ENCODE measurements at regions of chr2 and their contacts with region 1.

Region 1: GRCh38 chr2:160406591-160407392 is 86.8 kb downstream of the RBMS1 start:
- DNase-seq: peak; percentile 88
- H3K4me3 ChIP-seq: peak overlapping the region; percentile 89
- H3K27ac ChIP-seq: peak overlapping the region; percentile 80
- H3K4me1 ChIP-seq: peaks cover 55% of the 10 kb centered on the region
- CTCF ChIP-seq: peak; percentile 62; the same call in 1 of the 2 replicates

Region 2: DNA sequence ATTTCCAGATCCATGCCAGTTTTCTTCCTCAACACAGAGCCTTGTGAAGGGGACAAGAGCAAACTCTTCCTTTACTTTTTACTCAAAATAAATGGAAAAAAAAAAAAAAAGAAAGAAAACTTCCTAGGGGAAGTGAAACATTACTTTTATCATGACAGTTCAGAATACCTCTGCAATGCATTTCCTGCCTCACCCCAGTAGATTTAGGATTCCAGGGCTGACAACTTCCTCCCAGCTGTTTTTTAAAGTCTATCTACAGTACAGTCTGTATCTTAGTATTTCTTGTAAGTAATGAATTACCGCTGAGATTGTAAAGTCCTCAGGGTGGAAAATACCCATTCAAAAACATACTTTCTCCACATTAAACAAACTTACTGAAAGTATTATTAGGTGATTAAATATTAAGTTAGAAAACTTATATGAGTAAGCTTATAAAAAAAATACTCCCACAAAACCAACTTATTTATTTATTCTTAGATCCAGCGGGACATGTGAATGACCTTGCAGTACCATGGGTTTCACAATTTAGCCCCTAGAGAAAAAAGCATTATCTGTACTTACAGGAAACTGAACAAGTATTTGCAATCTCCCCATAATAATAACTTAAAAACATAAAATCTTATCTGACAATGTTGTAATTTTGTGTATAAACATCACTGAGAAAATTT is 30.9 kb before region 1 on chr2:
- CTCF ChIA-PET with region 1: no interaction called
- POLR2A ChIA-PET with region 1: interaction called, 14 read pairs
- intact Hi-C with region 1: no loop called
- DNase-seq: peak; percentile 64
- H3K4me3 ChIP-seq: peak overlapping the region; percentile 2
- H3K27ac ChIP-seq: peak overlapping the region; percentile 29
- H3K4me1 ChIP-seq: peaks cover 27% of the 10 kb centered on the region
- CTCF ChIP-seq: no peak

Region 3: DNA sequence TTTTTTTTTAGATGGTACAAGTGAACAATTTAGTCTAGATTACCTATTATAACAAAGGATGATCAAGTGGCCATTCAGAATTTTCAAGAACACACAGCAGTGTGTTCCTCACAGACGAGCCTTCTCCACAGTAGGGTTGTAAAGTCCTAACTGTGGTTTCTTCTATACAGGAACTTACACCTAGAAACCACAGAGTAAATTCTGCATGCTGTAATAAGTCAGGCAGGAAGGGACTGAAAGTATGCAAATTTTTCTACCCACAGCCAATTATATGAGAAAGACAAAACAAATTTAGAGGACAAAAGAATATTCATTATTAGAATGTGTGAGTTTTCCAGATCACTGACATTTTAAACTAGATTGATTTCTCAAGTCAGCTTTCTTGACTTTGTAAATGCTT is 12.6 kb before region 1 on chr2:
- CTCF ChIA-PET with region 1: no interaction called
- POLR2A ChIA-PET with region 1: interaction called, 30 read pairs
- intact Hi-C with region 1: no loop called
- DNase-seq: peak; percentile 71
- H3K4me3 ChIP-seq: peak overlapping the region; percentile 32
- H3K27ac ChIP-seq: peak overlapping the region; percentile 50
- H3K4me1 ChIP-seq: peaks cover 24% of the 10 kb centered on the region
- CTCF ChIP-seq: no peak

Region 4: DNA sequence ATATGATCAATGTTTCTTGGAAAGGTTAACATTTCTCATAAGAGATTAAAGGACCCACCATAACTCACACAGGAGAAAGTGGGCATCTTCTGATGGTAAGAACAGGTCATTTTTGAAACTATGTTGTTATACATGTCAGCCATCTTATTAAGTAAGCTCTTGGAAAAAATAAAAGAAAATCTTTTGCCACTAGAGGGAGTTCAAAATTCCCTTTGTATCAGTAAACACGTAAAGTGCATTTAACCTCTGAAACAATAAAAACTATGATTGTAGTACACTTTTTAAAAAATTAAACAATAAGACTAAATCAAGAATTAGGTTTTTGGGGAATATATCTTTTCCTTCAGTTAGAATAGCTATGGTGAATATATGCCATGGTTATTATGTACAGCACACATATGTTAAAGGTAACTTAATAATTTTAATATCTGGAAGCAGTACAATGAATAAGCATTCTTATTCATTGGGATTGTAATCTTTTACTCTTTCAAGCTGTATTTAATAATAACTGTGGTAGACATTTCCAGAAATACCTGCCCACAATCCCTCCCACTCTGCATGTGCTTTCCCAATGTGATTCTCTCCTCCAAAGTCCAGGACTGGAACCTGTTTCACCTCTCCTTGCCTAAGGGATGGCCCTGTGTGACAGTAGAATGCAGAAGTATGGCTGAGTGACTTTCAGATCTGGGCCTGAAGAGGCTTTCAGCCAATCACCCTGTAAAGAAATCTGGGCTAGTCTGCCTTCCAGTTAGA is 22.6 kb after region 1 on chr2:
- CTCF ChIA-PET with region 1: interaction called, 3 read pairs
- POLR2A ChIA-PET with region 1: interaction called, 33 read pairs
- intact Hi-C with region 1: no loop called
- DNase-seq: peak; percentile 79
- H3K4me3 ChIP-seq: no peak overlapping the region
- H3K27ac ChIP-seq: peak overlapping the region; percentile 63
- H3K4me1 ChIP-seq: peaks cover 34% of the 10 kb centered on the region
- CTCF ChIP-seq: peak; percentile 92

Region 5: GRCh38 chr2:161090411-161090810 is 683.6 kb after region 1 on chr2:
- CTCF ChIA-PET with region 1: no interaction called
- POLR2A ChIA-PET with region 1: interaction called, 3 read pairs
- intact Hi-C with region 1: loop called (anchors 10 kb)
- DNase-seq: no peak
- H3K4me3 ChIP-seq: no peak overlapping the region
- H3K27ac ChIP-seq: no peak overlapping the region
- H3K4me1 ChIP-seq: peaks cover 26% of the 10 kb centered on the region
- CTCF ChIP-seq: no peak

Region 6: GRCh38 chr2:161238560-161239325 is 832.0 kb after region 1 on chr2:
- CTCF ChIA-PET with region 1: no interaction called
- POLR2A ChIA-PET with region 1: no interaction called
- intact Hi-C with region 1: loop called (anchors 10 kb)
- DNase-seq: peak; percentile 35
- H3K4me3 ChIP-seq: peak overlapping the region; percentile 57
- H3K27ac ChIP-seq: no peak overlapping the region
- H3K4me1 ChIP-seq: peaks cover 56% of the 10 kb centered on the region
- CTCF ChIP-seq: no peak